ENCODE measurements at regions of chr9 and their contacts with region 1.

Region 1: GRCh38 chr9:14107977-14108376 is 206.0 kb downstream of the NFIB start:
- DNase-seq: no peak
- ATAC-seq: no peak
- H3K4me3 ChIP-seq: no peak overlapping the region
- H3K27ac ChIP-seq: no peak overlapping the region
- H3K4me1 ChIP-seq: no peaks in the 10 kb centered on the region
- H3K27me3 ChIP-seq: no peaks in the 10 kb centered on the region
- CTCF ChIP-seq: no peak
- EP300 ChIP-seq: no peak
- POLR2A ChIP-seq: no peak
- RAD21 ChIP-seq: no peak

Region 2: GRCh38 chr9:13330396-13331004 is 777.5 kb before region 1 on chr9:
- CTCF ChIA-PET with region 1: no interaction called
- POLR2A ChIA-PET with region 1: no interaction called
- in situ Hi-C with region 1: no loop called
- intact Hi-C with region 1: loop called (anchors 10 kb)
- DNase-seq: no peak
- ATAC-seq: no peak
- H3K4me3 ChIP-seq: no peak overlapping the region
- H3K27ac ChIP-seq: no peak overlapping the region
- H3K4me1 ChIP-seq: no peaks in the 10 kb centered on the region
- H3K27me3 ChIP-seq: no peaks in the 10 kb centered on the region
- CTCF ChIP-seq: no peak
- EP300 ChIP-seq: no peak
- POLR2A ChIP-seq: no peak
- RAD21 ChIP-seq: no peak

Region 3: DNA sequence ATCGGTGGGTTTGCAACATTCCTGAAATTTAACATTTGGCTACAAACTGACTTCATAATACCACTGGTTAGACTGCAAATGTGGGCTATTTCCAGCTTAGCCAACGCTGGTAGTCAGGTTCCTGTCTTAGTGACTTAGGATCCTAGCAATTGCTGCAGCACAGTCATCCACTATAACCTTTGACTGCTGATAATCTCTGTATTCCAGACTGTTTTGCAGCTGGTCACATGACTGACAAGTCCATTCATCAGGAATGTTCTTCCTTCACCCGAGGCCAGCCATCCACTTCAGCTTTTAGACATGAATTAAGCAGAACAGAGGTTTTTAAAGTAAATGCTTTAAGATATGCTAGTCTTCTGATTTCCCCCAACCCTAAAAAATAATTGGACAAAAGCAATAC is 402.6 kb before region 1 on chr9:
- CTCF ChIA-PET with region 1: no interaction called
- POLR2A ChIA-PET with region 1: no interaction called
- in situ Hi-C with region 1: no loop called
- intact Hi-C with region 1: no loop called
- DNase-seq: no peak
- ATAC-seq: no peak
- H3K4me3 ChIP-seq: no peak overlapping the region
- H3K27ac ChIP-seq: no peak overlapping the region
- H3K4me1 ChIP-seq: no peaks in the 10 kb centered on the region
- H3K27me3 ChIP-seq: no peaks in the 10 kb centered on the region
- CTCF ChIP-seq: no peak
- EP300 ChIP-seq: no peak
- POLR2A ChIP-seq: no peak
- RAD21 ChIP-seq: no peak

Region 4: DNA sequence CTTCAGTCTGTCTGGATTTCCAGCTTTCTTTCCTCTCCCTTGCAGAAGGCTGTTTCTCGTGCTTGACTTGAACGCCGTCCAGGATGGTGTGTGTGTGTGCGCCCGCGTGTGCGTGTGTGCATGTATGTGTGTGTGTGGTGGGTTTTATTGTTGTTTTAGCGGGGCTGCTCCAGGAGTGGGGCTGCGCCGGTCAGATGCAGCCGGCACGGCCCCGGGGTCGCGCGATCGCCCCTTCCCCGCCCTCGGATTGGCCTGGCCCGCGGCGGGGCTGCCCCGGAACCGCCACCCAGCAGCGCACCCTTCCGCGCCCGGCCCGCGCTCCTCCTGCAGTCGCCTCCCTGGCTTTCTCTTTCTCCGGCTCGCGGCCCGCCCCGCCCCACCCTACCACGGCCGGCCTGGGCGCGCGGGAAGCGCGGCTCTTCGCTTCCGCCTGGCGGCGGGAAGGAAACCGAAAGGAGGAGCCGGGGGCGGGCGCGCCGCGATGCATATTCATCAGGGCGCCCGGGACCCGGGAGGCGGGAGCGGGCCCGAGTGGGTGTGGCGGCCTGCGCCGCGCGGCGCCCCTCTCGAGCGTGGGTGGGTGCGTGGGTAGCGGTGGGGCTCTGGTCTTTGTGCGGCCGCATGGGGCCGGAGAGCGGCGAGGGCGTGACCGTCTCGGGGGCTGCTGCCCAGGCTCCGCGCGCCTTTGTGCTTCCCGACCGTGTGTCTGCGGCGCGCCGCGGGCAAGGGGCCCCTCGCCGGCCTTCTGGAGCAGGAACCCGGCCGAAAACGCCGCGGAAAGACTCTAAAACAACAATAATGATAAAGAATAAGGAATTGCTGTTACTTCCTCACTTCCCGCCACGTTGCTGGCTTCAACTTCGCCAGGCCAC is 214.5 kb after region 1 on chr9:
- CTCF ChIA-PET with region 1: no interaction called
- POLR2A ChIA-PET with region 1: no interaction called
- in situ Hi-C with region 1: loop called (anchors 10 kb)
- intact Hi-C with region 1: no loop called
- DNase-seq: peak; percentile 71
- ATAC-seq: peak; percentile 98
- H3K4me3 ChIP-seq: peak overlapping the region; percentile 56 to 81 (median 76)
- H3K27ac ChIP-seq: peak overlapping the region; percentile 52
- H3K4me1 ChIP-seq: peaks cover 47% of the 10 kb centered on the region
- H3K27me3 ChIP-seq: peaks cover 0 to 6% of the 10 kb centered on the region in 2 experiments; a peak in 2 of 5 replicates
- CTCF ChIP-seq: peak; percentile 64
- EP300 ChIP-seq: no peak
- POLR2A ChIP-seq: no peak
- RAD21 ChIP-seq: peak; percentile 65

Measured in HepG2 (cell line).